H1 (cell line): ENCODE measurements at regions of chr1 and their contacts with region 1.

Region 1: GRCh38 chr1:44511769-44512168 is 106.7 kb downstream of the RNF220 start:
- DNase-seq: no peak
- H3K4me3 ChIP-seq: no peak overlapping the region
- H3K27ac ChIP-seq: no peak overlapping the region
- H3K4me1 ChIP-seq: peaks cover 14 to 29% (median 22%) of the 10 kb centered on the region in 4 experiments
- H3K27me3 ChIP-seq: peaks cover 0 to 8% (median 3%) of the 10 kb centered on the region in 4 experiments; a peak in 4 of 7 replicates
- CTCF ChIP-seq: no peak
- EP300 ChIP-seq: no peak
- POLR2A ChIP-seq: no peak
- RAD21 ChIP-seq: no peak

Region 2: DNA sequence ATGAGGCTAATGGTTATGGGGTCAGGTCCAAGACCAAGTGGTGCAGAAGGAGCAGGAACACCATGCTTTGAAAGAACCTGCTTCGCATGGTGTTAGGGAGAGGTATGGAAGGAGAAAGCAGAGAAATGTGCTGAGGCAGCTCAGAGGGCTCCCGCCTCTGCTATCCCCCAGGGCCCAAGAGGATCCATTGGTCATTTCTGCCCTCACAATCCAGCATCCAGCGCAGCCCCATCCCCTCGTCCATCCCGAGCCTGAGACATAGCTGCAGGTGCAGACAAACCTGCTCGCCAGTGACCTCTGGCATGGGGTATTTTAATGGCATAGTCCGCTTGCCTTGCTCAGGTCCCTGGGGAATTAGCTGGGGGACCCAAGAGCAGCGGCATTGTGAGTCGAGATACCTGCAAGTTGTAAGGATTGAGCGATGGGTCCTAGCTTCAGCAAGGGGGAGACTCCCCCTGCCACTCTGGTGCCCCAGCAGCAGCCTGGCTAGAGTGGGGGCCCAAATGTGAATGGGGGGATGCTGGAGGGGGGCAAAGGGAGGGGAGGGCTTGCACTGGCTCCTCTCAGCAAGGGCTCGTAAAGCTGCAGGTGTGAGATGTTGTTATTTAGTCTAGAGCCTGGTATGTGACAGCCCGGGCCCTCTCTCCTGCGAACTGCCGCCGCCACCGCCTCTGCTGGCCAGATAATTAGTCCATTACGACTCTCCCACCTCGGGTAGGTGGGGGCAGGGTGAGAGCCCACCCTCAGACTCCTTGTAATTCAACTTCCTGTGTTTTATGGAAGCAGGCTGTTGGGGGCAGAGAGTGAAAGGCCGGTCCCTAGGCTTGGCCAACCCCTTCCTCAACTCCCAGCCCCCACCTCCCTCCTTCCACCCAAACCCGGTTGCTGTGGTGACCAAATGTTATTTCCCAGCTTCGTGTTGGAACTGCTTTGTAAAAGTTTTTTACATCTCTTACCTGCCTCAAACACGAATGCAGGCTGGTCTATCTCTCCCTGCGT is 12.1 kb after region 1 on chr1:
- CTCF ChIA-PET with region 1: interaction called, 16 read pairs
- POLR2A ChIA-PET with region 1: interaction called, 25 read pairs
- DNase-seq: peak; percentile 70 to 80
- H3K4me3 ChIP-seq: peak overlapping the region; percentile 37 to 59 (median 50); a peak in 7 of 8 replicates
- H3K27ac ChIP-seq: peak overlapping the region; percentile 39
- H3K4me1 ChIP-seq: peaks cover 19 to 34% (median 23%) of the 10 kb centered on the region in 4 experiments
- H3K27me3 ChIP-seq: no peaks in the 10 kb centered on the region
- CTCF ChIP-seq: peak; percentile 11 to 28 (median 22); a peak in 2 of 4 replicates
- EP300 ChIP-seq: no peak
- POLR2A ChIP-seq: peak in 1 of 2 experiments; percentile 64; a peak in 2 of 3 replicates
- RAD21 ChIP-seq: peak; percentile 29 to 42

Region 3: GRCh38 chr1:44531785-44532566 is 20.2 kb after region 1 on chr1:
- CTCF ChIA-PET with region 1: interaction called, 13 read pairs
- POLR2A ChIA-PET with region 1: interaction called, 3 read pairs
- DNase-seq: no peak
- H3K4me3 ChIP-seq: no peak overlapping the region
- H3K27ac ChIP-seq: no peak overlapping the region
- H3K4me1 ChIP-seq: peaks cover 15 to 26% (median 23%) of the 10 kb centered on the region in 4 experiments
- H3K27me3 ChIP-seq: no peaks in the 10 kb centered on the region
- CTCF ChIP-seq: no peak
- EP300 ChIP-seq: no peak
- POLR2A ChIP-seq: no peak
- RAD21 ChIP-seq: no peak